Activated naive CD4-positive, alpha-beta T cell treated with anti-CD3 and anti-CD28 coated beads for 36 hours (primary cell): ENCODE measurements at regions of chr4 and their contacts with region 1.

Region 1: DNA sequence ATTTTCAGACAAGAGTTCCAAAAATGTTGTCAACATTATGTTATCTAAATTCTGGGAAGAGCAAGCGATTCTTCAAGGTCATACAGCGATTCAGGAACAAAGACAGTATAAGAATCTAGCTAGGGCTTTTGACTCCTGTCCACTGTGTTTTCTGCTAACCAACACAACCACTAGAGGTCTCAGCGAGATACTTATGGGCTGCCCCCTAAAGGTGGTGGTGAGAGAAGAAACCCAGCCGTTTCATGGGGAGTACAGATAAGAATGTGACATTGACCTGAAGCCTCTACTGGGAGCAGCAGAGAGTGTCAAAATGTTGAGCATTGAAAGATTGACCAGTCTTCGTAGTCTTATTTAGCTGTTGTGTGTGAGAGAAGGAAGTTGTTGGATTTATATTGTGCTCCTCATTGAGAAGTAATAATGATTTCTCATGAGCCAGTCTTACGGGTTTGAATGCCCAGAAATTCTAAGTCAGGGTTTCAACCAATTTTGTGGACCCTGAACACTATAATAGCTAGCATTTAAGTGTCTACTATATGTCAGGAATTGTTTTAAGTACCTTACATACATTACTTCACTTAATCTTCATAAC is 168.3 kb downstream of the SPRY1 start:
- DNase-seq: peak; percentile 65
- H3K4me3 Mint-ChIP-seq: no peak overlapping the region
- H3K27ac Mint-ChIP-seq: no peak overlapping the region
- H3K4me1 Mint-ChIP-seq: no peaks in the 10 kb centered on the region
- H3K27me3 Mint-ChIP-seq: no peaks in the 10 kb centered on the region

Region 2: DNA sequence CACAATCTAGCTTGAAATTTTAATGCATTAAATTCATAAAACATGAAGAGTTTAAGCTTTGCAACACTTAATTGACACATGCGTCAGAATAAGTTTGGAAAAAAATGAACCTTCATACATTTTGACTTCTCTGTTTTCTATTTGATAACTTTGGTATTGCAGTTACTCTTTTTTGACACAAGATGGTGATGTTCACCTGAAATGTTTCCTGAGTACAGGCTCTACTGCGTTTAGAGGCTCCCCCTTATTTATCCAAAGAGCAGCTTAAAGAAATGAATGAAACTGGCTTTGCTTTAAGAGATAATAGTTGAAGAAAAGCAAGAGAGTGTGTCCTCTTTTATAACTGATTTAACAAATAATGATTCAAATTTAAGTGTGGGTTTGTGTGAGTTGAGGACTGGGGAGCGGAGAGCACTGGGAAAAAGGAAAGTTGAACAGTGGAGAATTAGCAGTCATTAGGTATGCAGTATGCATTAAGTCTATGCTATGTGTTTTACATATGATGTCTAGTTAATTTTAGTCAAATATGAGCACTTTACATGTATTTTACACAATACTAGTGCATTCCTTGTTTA is 461.9 kb before region 1 on chr4:
- CTCF ChIA-PET with region 1: no interaction called
- intact Hi-C with region 1: loop called (anchors 2 kb)
- DNase-seq: no peak
- H3K4me3 Mint-ChIP-seq: no peak overlapping the region
- H3K27ac Mint-ChIP-seq: no peak overlapping the region
- H3K4me1 Mint-ChIP-seq: no peaks in the 10 kb centered on the region
- H3K27me3 Mint-ChIP-seq: no peaks in the 10 kb centered on the region

Region 3: DNA sequence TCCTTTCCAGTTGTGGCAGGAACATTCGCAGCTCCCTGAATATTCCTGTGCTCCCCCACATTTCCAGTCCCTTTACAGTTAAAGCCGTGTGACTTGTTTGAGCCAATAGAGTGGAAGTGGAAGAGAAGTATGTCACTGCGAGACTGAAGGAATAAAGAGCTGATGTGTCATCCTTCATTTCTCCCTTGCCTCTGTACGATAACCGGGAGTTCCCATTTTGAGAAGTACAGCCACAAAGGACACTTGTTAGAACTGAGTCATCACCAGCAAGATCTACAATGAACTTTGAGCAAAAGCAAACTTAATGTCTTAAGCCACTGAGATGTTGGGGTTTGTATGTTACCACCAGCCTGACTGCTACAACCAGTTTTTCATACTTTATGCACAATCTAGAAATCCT is 75.9 kb before region 1 on chr4:
- CTCF ChIA-PET with region 1: no interaction called
- intact Hi-C with region 1: loop called (anchors 5 kb)
- DNase-seq: no peak
- H3K4me3 Mint-ChIP-seq: no peak overlapping the region
- H3K27ac Mint-ChIP-seq: no peak overlapping the region
- H3K4me1 Mint-ChIP-seq: peaks cover 8% of the 10 kb centered on the region
- H3K27me3 Mint-ChIP-seq: peaks cover 3% of the 10 kb centered on the region

Region 4: DNA sequence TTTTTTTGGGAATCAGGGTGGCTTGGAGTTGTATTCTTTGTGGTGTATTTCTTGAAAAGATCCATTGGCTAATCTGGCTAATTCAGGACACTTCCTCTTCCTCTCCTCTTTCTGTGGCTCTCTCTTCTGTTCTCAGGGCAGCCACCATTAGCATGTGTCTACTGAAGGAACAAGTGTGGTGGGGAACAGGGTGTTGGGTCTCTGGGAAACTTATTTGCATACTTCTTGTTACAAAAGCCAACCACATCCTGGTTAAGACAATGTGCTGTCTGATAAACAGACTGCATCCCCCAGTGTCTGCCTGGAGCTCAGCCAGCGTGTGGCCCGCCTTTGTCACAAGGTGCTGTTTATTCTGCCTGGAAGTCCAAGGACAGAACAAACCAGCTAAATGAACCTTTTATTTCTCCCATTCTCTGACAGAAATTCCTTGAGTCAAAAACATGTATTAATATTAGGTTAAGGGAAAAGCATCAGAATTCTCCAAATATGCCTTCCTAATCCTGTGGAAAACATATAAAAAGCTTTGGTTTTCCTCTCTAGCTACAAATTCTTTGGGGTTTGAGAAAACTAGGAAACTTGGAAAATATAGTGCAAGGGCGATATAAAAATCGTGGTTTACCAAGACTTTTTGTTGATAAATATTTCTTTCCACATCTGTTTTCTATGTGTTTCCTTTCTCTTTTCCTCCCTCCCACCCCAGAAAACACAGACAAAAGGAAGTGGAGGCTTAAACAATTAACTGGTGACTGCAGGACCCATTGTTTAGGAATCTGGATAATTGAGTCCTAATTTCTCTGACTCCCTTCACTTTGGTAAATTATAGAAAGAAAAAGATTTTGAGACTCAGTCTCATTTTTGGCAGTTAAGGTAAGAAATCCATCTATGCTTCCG is 35.3 kb after region 1 on chr4:
- CTCF ChIA-PET with region 1: interaction called, 4 read pairs
- intact Hi-C with region 1: loop called (anchors 2 kb)
- DNase-seq: peak; percentile 48
- H3K4me3 Mint-ChIP-seq: no peak overlapping the region
- H3K27ac Mint-ChIP-seq: no peak overlapping the region
- H3K4me1 Mint-ChIP-seq: peaks cover 19% of the 10 kb centered on the region
- H3K27me3 Mint-ChIP-seq: no peaks in the 10 kb centered on the region

Region 5: DNA sequence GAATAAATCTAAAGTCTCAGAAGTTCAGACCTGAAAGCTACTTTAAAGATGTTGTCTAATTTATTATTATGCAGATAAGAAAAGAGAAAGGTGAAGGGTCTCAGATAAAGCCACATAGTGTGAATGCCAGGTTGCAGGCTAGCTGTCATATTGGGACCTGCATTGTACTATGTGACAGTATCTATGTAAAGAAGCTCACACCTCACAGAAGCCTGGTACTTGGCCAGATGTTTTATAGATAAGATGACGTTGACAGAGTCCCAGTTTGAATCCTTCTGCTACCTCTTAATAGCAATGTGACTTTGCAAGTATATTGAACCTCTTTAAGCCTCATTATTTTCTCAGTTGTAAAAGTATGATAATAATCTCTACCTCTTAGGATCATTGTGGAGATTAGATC is 58.8 kb after region 1 on chr4:
- CTCF ChIA-PET with region 1: no interaction called
- intact Hi-C with region 1: no loop called
- DNase-seq: no peak
- H3K4me3 Mint-ChIP-seq: no peak overlapping the region
- H3K27ac Mint-ChIP-seq: no peak overlapping the region
- H3K4me1 Mint-ChIP-seq: no peaks in the 10 kb centered on the region
- H3K27me3 Mint-ChIP-seq: no peaks in the 10 kb centered on the region